GM13976 (cell line): ENCODE measurements at regions of chr7 and their contacts with region 1.

Region 1: GRCh38 chr7:129664029-129665012 is 52.8 kb downstream of the NRF1 start:
- DNase-seq: peak; percentile 63
- CTCF ChIP-seq: peak; percentile 20

Region 2: GRCh38 chr7:129202058-129202777 is 462.1 kb before region 1 on chr7:
- in situ Hi-C with region 1: no loop called
- DNase-seq: no peak
- CTCF ChIP-seq: no peak

Region 3: GRCh38 chr7:129224251-129225205 is 439.8 kb before region 1 on chr7 and contains the start of gene AHCYL2:
- in situ Hi-C with region 1: no loop called
- DNase-seq: peak; percentile 95
- CTCF ChIP-seq: no peak

Region 4: GRCh38 chr7:129569811-129570215 is 94.5 kb before region 1 on chr7:
- in situ Hi-C with region 1: no loop called
- DNase-seq: no peak
- CTCF ChIP-seq: no peak

Region 5: DNA sequence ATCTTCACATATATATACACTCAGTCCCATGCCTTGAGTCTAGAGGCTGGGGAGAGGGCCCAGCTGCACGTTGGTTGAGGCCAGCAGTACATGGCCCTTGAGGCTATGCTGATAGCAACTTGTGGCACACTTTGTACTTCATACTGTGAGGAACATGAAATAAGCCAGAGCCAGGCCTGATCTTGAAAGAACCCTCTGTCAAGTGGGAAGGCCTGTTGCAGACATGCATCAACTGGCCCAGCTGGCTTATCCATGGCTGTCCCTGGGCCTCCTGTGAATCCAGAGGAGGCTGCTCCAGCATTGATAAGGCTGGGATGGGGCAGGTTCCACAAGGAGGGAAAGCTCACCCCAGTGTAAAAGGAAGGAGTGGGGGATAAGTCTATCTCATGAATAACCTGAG is 87.6 kb after region 1 on chr7:
- in situ Hi-C with region 1: no loop called
- DNase-seq: no peak
- CTCF ChIP-seq: no peak

Region 6: DNA sequence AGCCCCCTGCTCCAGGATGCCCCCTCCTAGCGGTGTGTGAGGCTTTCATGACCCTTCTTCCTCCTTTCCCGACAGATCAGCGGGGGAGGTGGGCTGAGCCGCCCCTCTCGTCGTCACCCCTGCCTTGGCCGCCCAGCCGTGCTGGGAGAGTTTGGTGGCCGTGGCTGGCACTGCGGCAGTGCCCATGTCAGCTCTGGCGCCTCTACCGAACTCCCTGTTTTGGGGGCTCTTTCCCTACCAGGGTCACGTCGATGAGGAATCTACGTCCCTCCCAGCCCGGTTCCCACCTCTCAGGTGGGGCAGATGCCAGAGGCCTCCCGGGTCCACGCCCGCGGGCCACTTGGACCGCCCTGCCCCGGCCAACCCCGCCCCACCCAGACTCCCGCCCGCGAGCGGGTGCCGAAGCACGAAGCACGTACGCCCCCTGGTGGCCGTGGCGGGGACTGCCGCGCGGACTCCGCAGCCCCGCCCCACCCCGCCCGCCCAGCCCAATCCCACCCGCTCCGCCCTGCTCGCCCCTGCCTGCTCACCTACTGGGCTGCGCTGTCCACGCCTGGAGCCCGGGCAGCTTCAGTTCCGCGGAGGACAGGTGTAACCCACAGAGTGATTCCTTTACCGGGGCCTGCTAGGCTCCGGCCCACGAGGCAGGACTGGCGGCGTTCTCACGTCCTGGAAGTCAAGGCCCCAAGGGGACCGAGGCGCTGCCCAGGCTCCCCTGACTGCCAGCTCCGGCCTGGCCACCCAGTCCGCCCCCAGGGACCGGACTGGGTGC is 161.4 kb after region 1 on chr7:
- in situ Hi-C with region 1: loop called (anchors 10 kb)
- DNase-seq: peak; percentile 91
- CTCF ChIP-seq: peak; percentile 75